Posterior vena cava (tissue), 2 donors: ENCODE measurements at regions of chr5 and their contacts with region 1.

Region 1: GRCh38 chr5:97245386-97245785 is 62.3 kb upstream of the RIOK2 start:
- DNase-seq: no peak

Region 2: DNA sequence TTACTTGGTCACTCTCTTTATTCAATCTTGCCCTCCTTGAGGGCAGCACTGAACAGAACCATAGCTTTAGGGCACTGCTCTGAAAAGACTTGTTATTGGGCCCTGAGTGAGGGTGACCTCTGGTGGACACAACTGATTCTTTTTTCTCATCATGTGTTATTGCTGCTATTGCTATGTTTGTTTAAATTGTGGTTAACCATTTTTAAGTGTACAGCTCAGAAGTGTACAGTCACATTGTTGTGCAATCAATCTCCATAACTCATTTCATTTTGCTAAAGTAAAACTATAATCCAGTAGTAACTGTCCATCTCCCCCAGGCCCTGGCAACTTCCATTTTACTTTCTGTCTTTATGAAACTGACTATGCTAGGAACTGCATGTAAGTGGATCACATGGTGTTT is 288.8 kb after region 1 on chr5:
- intact Hi-C with region 1: loop called in 1 of 2 experiments (anchors 5 kb)
- DNase-seq: no peak